ENCODE measurements at regions of chr3 and their contacts with region 1.

Region 1: GRCh38 chr3:170357176-170357919 is at the start of gene SKIL:
- DNase-seq: peak; percentile 97 to 99
- H3K4me3 ChIP-seq: peak within 1 kb of the TSS; percentile 91 to 98
- H3K27ac ChIP-seq: peak within 1 kb of the TSS; percentile 98 to 100
- H3K4me1 ChIP-seq: peaks cover 11 to 21% of the 10 kb centered on the region in 2 donors
- H3K27me3 ChIP-seq: no peaks in the 10 kb centered on the region
- CTCF ChIP-seq: peak in 1 of 3 experiments; percentile 46
- total RNA-seq, gene SKIL: 30.2 TPM

Region 2: GRCh38 chr3:168828943-168829342 is 1528.4 kb before region 1 on chr3:
- intact Hi-C with region 1: no loop called
- DNase-seq: no peak
- H3K4me3 ChIP-seq: no peak overlapping the region
- H3K27ac ChIP-seq: no peak overlapping the region
- H3K4me1 ChIP-seq: no peaks in the 10 kb centered on the region
- H3K27me3 ChIP-seq: no peaks in the 10 kb centered on the region
- CTCF ChIP-seq: no peak

Region 3: GRCh38 chr3:169662132-169662842 is 695.1 kb before region 1 on chr3:
- intact Hi-C with region 1: loop called (anchors 5 kb)
- DNase-seq: peak in 1 of 2 donors; percentile 88
- H3K4me3 ChIP-seq: peak overlapping the region; percentile 69 to 76
- H3K27ac ChIP-seq: peak overlapping the region; percentile 96 to 97
- H3K4me1 ChIP-seq: peaks cover 0 to 2% of the 10 kb centered on the region in 2 donors
- H3K27me3 ChIP-seq: no peaks in the 10 kb centered on the region
- CTCF ChIP-seq: peak; percentile 53 to 80 (median 68)

Region 4: GRCh38 chr3:169772897-169773828 is 584.2 kb before region 1 on chr3 and contains the start of gene MYNN:
- intact Hi-C with region 1: loop called (anchors 2 kb)
- DNase-seq: peak; percentile 74 to 96
- H3K4me3 ChIP-seq: peak within 1 kb of the TSS; percentile 75 to 78
- H3K27ac ChIP-seq: peak within 1 kb of the TSS; percentile 96 to 97
- H3K4me1 ChIP-seq: peaks cover 7 to 14% of the 10 kb centered on the region in 2 donors
- H3K27me3 ChIP-seq: no peaks in the 10 kb centered on the region
- CTCF ChIP-seq: peak in 1 of 3 experiments; percentile 11
- total RNA-seq, gene MYNN: 3.9 TPM

Region 5: DNA sequence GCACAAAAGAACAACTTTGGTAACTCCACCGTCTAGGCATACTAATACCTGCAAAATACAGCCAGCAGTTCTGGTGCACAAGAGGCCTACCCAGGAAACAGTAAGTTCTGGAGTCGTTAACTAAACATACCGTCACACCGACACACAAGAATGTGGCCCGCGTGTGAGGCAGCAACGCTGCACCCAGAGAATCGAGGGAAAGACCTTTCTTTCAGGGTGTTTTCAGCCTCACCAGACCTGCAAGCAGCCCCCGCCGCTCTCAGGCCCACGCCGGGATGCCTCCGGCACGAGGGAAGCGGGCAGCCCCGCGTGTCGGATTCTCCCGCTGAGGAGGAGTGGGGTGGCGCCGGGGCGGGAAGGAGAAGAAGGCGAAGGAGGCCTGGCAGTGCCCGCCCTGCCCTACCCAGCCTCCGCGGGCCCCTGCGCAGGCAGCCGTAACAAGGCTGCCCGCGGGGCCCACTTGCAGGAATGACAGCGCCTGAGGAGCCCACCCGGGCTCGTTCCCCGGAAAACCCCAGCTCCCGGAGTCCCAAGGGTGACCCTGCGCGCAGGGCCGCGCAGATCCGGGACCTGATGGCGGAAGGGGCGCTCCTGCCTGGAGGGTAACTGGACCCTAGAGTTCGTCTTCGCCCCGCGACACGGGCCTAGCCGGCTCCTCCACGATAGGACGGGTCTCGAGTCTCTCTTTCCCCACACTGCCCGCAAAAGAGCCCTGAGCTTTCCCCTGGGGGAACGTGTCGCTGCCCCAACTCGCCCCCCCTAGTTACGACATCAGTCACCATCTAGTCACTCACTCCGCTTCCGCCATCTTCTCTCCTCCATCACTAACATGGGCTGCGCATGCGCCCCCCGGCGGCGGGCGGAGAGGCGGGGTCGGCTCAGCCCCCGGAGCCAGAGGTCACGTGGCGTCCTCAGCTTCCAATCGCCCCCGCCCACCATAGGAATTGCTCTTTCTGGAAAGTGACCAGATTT is 176.2 kb before region 1 on chr3 and contains the start of gene PHC3:
- intact Hi-C with region 1: loop called (anchors 1 kb)
- DNase-seq: peak; percentile 78 to 97
- H3K4me3 ChIP-seq: peak within 1 kb of the TSS; percentile 80 to 85
- H3K27ac ChIP-seq: peak within 1 kb of the TSS; percentile 97 to 98
- H3K4me1 ChIP-seq: peaks cover 0 to 15% of the 10 kb centered on the region in 2 donors
- H3K27me3 ChIP-seq: no peaks in the 10 kb centered on the region
- CTCF ChIP-seq: peak in 1 of 3 experiments; percentile 22
- total RNA-seq, gene PHC3: 43.3 TPM

Region 6: GRCh38 chr3:170307671-170308403 is 49.5 kb before region 1 on chr3:
- intact Hi-C with region 1: loop called (anchors 2 kb)
- DNase-seq: no peak
- H3K4me3 ChIP-seq: no peak overlapping the region
- H3K27ac ChIP-seq: no peak overlapping the region
- H3K4me1 ChIP-seq: no peaks in the 10 kb centered on the region
- H3K27me3 ChIP-seq: no peaks in the 10 kb centered on the region
- CTCF ChIP-seq: no peak

Region 7: DNA sequence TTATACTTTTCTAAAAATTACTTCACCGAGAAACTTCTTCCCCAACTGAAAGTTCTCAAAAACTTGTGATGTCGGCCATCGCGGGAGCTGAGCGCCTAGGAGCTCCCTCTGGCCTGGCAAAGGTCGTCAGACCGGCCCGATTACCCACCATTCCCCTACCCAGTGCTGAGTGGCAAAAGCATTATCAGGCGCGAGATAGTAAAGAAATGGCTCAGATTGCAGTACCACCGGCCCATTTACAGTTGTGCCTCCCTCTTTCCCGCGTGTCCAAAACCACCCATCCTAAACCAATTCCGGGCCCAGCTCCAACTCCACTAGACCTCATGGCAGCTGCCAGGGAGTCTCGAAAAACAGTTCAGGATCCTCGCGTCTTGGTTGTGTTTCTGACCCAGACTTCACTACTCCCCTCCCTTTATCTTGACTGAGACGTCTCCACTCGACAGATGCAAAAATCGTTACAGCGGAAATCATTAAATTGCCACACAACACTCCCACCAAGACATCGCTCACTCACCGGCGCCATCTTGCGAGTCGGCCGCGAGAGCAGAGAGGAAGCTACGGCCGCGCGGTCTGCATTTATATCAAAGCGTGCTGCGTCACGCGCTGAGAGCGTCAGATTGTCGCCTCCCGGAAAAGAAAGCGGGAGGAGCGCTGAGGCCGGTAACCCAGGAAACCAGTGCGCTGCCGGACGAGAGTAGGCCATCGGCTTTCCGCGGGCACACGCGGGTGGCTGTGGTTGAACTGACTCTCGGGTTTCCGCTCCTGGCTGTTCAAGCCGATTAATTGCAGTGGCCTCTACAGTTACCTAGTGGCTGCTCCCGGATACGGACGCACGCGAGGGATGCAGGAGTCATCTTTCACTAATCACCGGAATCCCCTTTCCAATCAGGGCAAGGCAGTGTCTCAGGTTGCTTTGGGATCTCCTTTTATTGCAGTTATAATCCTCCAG is 512.6 kb after region 1 on chr3 and contains the start of gene RPL22L1:
- intact Hi-C with region 1: loop called (anchors 5 kb)
- DNase-seq: peak; percentile 72 to 97
- H3K4me3 ChIP-seq: peak within 1 kb of the TSS; percentile 73 to 82
- H3K27ac ChIP-seq: peak within 1 kb of the TSS; percentile 69 to 89
- H3K4me1 ChIP-seq: peaks cover 0 to 20% of the 10 kb centered on the region in 2 donors
- H3K27me3 ChIP-seq: no peaks in the 10 kb centered on the region
- CTCF ChIP-seq: peak in 1 of 3 experiments; percentile 30
- total RNA-seq, gene RPL22L1: 39.2 TPM

Measured in ascending aorta (tissue), 2 donors.